AG04450 (cell line): ENCODE measurements at regions of chr2 and their contacts with region 1.

Region 1: GRCh38 chr2:159118115-159118858 is 149.8 kb downstream of the TANC1 start:
- DNase-seq: peak; percentile 77
- H3K4me3 ChIP-seq: no peak overlapping the region
- H3K27ac ChIP-seq: no peak overlapping the region
- H3K27me3 ChIP-seq: no peaks in the 10 kb centered on the region
- CTCF ChIP-seq: peak; percentile 92

Region 2: GRCh38 chr2:158953926-158954763 is 164.1 kb before region 1 on chr2:
- CTCF ChIA-PET with region 1: interaction called, 20 read pairs
- POLR2A ChIA-PET with region 1: no interaction called
- DNase-seq: no peak
- H3K4me3 ChIP-seq: no peak overlapping the region
- H3K27ac ChIP-seq: no peak overlapping the region
- H3K27me3 ChIP-seq: peaks cover 3% of the 10 kb centered on the region
- CTCF ChIP-seq: no peak

Region 3: DNA sequence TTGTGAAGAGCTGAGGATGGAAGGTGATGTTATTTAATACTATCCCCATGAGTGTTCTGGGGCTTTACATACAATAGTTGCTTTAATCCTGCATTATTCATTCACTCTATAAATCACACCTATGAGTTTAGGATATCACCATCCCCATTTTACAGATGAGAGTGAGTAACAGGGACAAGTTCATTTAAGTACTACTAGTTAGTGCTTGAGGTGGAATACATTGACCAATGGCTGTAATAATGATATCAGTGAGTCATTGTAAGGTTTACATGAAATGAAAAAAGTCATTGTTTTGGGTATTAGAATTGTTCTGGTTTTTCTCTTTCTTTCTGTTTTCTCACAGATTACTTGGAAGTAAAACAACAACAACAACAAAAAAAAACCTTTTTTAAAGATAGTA is 107.3 kb before region 1 on chr2:
- CTCF ChIA-PET with region 1: interaction called, 10 read pairs
- POLR2A ChIA-PET with region 1: no interaction called
- DNase-seq: no peak
- H3K4me3 ChIP-seq: no peak overlapping the region
- H3K27ac ChIP-seq: no peak overlapping the region
- H3K27me3 ChIP-seq: no peaks in the 10 kb centered on the region
- CTCF ChIP-seq: no peak

Region 4: GRCh38 chr2:159071190-159071915 is 46.9 kb before region 1 on chr2:
- CTCF ChIA-PET with region 1: interaction called, 13 read pairs
- POLR2A ChIA-PET with region 1: no interaction called
- DNase-seq: no peak
- H3K4me3 ChIP-seq: no peak overlapping the region
- H3K27ac ChIP-seq: no peak overlapping the region
- H3K27me3 ChIP-seq: no peaks in the 10 kb centered on the region
- CTCF ChIP-seq: peak; percentile 13; the same call in 1 of the 2 replicates

Region 5: GRCh38 chr2:159131914-159132281 is 13.6 kb after region 1 on chr2:
- CTCF ChIA-PET with region 1: interaction called, 55 read pairs
- POLR2A ChIA-PET with region 1: interaction called, 3 read pairs
- DNase-seq: peak; percentile 79
- H3K4me3 ChIP-seq: no peak overlapping the region
- H3K27ac ChIP-seq: peak overlapping the region; percentile 75
- H3K27me3 ChIP-seq: no peaks in the 10 kb centered on the region
- CTCF ChIP-seq: no peak

Region 6: GRCh38 chr2:159155320-159155719 is 37.0 kb after region 1 on chr2:
- CTCF ChIA-PET with region 1: interaction called, 37 read pairs
- POLR2A ChIA-PET with region 1: no interaction called
- DNase-seq: no peak
- H3K4me3 ChIP-seq: no peak overlapping the region
- H3K27ac ChIP-seq: no peak overlapping the region
- H3K27me3 ChIP-seq: no peaks in the 10 kb centered on the region
- CTCF ChIP-seq: no peak